Pancreas (tissue), 10 donors: ENCODE measurements at regions of chr17 and their contacts with region 1.

Region 1: DNA sequence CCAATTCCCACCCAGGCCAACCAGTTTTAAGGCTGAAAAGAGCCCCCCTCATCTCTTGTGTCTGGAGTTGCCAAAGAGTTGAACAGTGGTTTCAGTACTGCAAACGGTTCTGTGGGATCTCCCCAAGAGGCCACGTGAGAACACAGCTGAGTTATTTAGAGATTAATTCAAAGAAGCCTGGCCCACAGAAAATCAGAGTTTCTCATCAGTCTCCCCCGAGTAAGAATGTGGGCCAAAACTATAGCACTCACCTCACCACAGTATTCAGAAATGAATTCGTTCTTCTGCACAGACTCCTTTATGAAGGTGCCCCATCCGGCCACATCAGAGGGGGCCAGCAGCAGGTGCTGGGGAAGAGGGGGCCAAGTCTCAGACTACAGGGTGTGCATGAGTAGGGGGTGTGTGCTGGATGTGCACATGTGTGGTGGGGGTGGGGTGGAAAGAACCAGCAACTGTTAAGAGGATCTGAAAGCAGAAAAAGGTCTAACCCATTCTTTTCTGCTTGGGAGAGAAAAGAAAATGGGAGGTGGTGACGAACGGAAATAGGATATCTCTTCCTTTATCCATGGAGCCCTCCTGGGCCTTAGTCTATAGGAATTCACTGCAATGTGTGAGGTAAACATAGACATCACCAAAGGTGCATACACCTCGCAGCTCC is 22.6 kb downstream of the CNTNAP1 start:
- DNase-seq: no peak
- ATAC-seq: no peak
- H3K4me3 ChIP-seq: no peak overlapping the region
- H3K27ac ChIP-seq: no peak overlapping the region
- H3K4me1 ChIP-seq: no peaks in the 10 kb centered on the region
- H3K27me3 ChIP-seq: no peaks in the 10 kb centered on the region
- CTCF ChIP-seq: no peak

Region 2: DNA sequence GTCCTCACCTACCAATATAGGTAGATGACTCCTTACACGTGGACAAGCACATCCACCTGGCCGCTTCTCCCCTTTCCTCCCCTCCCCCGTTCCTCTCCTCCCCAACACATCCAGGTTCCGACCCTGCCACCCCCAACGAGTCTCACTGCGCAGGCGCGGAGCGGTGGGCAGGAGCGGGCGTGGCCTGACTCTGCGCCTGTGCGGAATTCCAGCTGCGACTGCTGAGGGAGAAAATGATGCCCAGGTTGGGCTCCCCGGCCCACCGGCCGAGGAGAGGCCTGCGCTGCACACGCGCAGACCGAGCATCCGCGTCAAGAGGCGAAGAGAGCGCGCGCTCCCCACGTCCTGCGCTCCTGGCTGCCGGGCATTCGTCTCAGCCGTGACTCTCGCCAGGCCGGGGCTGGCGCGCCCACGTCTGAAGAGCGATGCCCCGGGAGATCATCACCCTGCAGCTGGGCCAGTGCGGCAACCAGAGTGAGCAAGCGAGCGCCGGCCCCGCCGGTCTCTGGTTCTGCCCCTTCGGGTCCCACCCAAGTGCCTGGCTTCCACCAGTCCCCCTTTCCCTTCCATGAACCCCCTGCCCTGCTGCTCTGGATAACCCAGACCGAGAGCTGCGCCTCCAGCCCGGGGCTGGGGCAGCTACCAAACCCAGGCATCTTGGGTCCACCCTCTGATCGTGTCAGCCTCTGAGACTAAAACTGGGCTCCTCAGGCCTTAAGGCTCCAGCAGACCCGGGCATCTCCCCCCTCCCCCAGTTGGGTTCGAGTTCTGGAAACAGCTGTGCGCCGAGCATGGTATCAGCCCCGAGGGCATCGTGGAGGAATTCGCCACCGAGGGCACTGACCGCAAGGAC is 45.7 kb before region 1 on chr17 and contains the start of gene TUBG2:
- intact Hi-C with region 1: no loop called
- DNase-seq: peak; percentile 88 to 96 (median 92)
- ATAC-seq: peak; percentile 89 to 95 (median 94)
- H3K4me3 ChIP-seq: peak within 1 kb of the TSS; percentile 39 to 81 (median 74)
- H3K27ac ChIP-seq: peak within 1 kb of the TSS; percentile 54 to 79 (median 71)
- H3K4me1 ChIP-seq: peaks cover 0 to 11% (median 0%) of the 10 kb centered on the region in 3 donors
- H3K27me3 ChIP-seq: no peaks in the 10 kb centered on the region
- CTCF ChIP-seq: no peak
- total RNA-seq, gene TUBG2: 10.9 to 43.4 (median 19.8) TPM

Region 3: DNA sequence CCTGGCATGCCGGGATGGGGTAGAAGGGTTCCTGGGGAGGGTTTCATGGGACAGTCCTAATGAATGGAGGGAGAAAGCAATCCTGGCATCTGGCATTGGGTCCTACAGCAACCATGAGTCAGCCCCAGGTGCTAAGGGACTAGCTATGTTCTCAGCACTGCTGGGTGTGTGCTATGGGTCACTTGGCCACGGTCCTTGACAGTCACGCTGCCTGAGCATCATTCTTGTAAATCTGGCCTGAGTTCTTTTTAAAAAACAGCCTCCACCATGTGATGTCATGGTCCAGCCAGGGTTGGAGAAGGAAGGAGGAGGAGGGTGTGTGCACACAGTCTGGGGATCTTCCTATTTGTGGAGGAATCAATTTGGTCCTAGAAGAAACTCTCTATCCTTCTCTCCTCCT is 49.8 kb after region 1 on chr17:
- intact Hi-C with region 1: no loop called
- DNase-seq: no peak
- ATAC-seq: peak in 2 of 4 donors; percentile 41 to 49
- H3K4me3 ChIP-seq: no peak overlapping the region
- H3K27ac ChIP-seq: no peak overlapping the region
- H3K4me1 ChIP-seq: no peaks in the 10 kb centered on the region
- H3K27me3 ChIP-seq: no peaks in the 10 kb centered on the region
- CTCF ChIP-seq: no peak

Region 4: GRCh38 chr17:42819944-42820535 is 115.1 kb after region 1 on chr17:
- intact Hi-C with region 1: loop called in 1 of 3 experiments (anchors 10 kb)
- DNase-seq: peak in 3 of 6 donors; percentile 51 to 71 (median 61)
- ATAC-seq: peak in 2 of 4 donors; percentile 28 to 32
- H3K4me3 ChIP-seq: no peak overlapping the region
- H3K27ac ChIP-seq: no peak overlapping the region
- H3K4me1 ChIP-seq: peaks cover 0 to 13% (median 10%) of the 10 kb centered on the region in 3 donors
- H3K27me3 ChIP-seq: no peaks in the 10 kb centered on the region
- CTCF ChIP-seq: peak in 3 of 4 donors; percentile 37 to 59 (median 44)